BJ (cell line): ENCODE measurements at regions of chr2 and their contacts with region 1.

Region 1: GRCh38 chr2:27335311-27335710 is 12.4 kb upstream of the MPV17 start:
- DNase-seq: no peak
- H3K4me3 ChIP-seq: no peak overlapping the region
- H3K27me3 ChIP-seq: no peaks in the 10 kb centered on the region
- CTCF ChIP-seq: no peak

Region 2: GRCh38 chr2:27255660-27256059 is 79.7 kb before region 1 on chr2:
- CTCF ChIA-PET with region 1: no interaction called
- POLR2A ChIA-PET with region 1: interaction called, 15 read pairs
- DNase-seq: no peak
- H3K4me3 ChIP-seq: no peak overlapping the region
- H3K27me3 ChIP-seq: peaks cover 23% of the 10 kb centered on the region
- CTCF ChIP-seq: no peak